ENCODE measurements at regions of chr14 and their contacts with region 1.

Region 1: GRCh38 chr14:100383727-100384158 is 60.6 kb downstream of the SLC25A47 start:
- DNase-seq: peak; percentile 87
- H3K4me3 ChIP-seq: peak overlapping the region in 1 of 2 experiments; percentile 15; a peak in 1 of 4 replicates
- H3K27ac ChIP-seq: peak overlapping the region in 1 of 2 experiments; percentile 90; a peak in 2 of 4 replicates
- H3K4me1 ChIP-seq: peaks cover 10 to 46% of the 10 kb centered on the region in 2 experiments
- H3K27me3 ChIP-seq: no peaks in the 10 kb centered on the region
- CTCF ChIP-seq: peak; percentile 83
- EP300 ChIP-seq: no peak
- RAD21 ChIP-seq: peak; percentile 88

Region 2: DNA sequence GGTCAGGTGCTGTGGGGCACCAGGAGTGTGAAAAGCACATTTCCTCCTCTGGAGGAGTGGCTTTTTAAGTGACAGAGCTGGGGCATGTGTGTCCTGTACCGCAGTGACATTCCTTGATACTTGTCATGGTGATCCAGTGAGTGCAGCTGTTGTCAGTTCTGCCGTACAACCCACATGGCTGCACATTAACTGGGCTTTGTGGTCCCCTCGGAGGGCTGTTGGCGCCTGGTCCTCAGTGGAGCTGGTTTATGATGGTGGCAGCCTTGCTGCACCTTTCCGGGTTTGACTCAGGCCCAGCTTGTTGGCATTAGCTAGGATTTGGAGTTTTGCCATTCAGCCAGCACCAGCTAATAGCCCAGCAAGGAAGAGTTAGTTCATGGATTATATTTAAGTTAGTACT is 16.4 kb after region 1 on chr14:
- CTCF ChIA-PET with region 1: interaction called, 55 read pairs
- POLR2A ChIA-PET with region 1: interaction called, 3 read pairs
- DNase-seq: peak; percentile 53
- H3K4me3 ChIP-seq: no peak overlapping the region
- H3K27ac ChIP-seq: peak overlapping the region; percentile 10 to 100; a peak in 3 of 4 replicates
- H3K4me1 ChIP-seq: peaks cover 5 to 75% of the 10 kb centered on the region in 2 experiments; a peak in 2 of 4 replicates
- H3K27me3 ChIP-seq: no peaks in the 10 kb centered on the region
- CTCF ChIP-seq: no peak
- EP300 ChIP-seq: 0 out of 4 replicates have a peak, but pooled peaks of 1 of the 2 experiments have one; percentile 4
- RAD21 ChIP-seq: no peak

Region 3: GRCh38 chr14:100540141-100540925 is 156.6 kb after region 1 on chr14:
- CTCF ChIA-PET with region 1: interaction called, 82 read pairs
- POLR2A ChIA-PET with region 1: no interaction called
- DNase-seq: peak; percentile 85
- H3K4me3 ChIP-seq: no peak overlapping the region
- H3K27ac ChIP-seq: peak overlapping the region in 1 of 2 experiments; percentile 56; a peak in 1 of 4 replicates
- H3K4me1 ChIP-seq: peaks cover 0 to 46% of the 10 kb centered on the region in 2 experiments; a peak in 1 of 4 replicates
- H3K27me3 ChIP-seq: no peaks in the 10 kb centered on the region
- CTCF ChIP-seq: peak; percentile 48
- EP300 ChIP-seq: no peak
- RAD21 ChIP-seq: peak; percentile 42

Region 4: DNA sequence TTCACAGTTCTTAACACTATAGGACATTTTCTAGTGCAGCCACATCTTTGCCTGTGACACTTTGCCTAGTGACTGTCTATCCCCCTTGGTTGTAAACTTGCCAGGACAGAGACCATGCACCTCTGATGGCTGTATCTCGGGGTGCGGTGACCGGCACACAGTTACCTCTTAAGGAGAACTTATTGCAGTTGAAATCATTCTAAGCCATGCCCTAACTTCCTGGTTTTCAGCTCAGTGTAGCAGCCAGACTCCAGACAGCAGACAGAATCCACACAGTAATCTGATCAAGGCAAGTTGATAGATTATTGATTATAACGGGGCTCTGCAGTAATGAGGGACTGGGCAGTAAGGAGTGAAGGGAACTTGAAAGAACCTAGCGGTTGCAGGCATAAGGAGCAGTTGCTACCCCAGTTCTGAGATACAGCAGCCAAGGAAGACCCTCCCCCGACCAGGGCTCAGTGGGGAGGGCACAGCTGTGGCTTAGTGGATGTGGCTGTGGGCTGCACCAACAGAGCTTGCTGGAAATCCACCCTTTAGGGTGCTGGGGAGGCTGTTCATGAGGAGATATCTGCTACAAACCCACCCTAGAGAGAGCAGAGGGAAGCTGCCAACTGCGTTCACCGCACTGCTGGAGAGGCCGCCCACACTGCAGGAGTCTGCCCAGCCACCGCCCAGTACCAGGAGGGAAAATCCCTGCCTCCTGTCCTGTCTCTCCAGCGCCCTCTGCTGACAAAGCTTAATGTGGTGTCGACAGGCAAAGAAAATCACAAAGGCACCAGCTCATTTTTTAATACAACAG is 261.6 kb after region 1 on chr14:
- CTCF ChIA-PET with region 1: interaction called, 58 read pairs
- POLR2A ChIA-PET with region 1: interaction called, 3 read pairs
- DNase-seq: peak; percentile 84
- H3K4me3 ChIP-seq: peak overlapping the region in 1 of 2 experiments; percentile 39; a peak in 1 of 4 replicates
- H3K27ac ChIP-seq: peak overlapping the region in 1 of 2 experiments; percentile 76; a peak in 2 of 4 replicates
- H3K4me1 ChIP-seq: peaks cover 5 to 34% of the 10 kb centered on the region in 2 experiments; a peak in 2 of 4 replicates
- H3K27me3 ChIP-seq: no peaks in the 10 kb centered on the region
- CTCF ChIP-seq: peak; percentile 53
- EP300 ChIP-seq: no peak
- RAD21 ChIP-seq: peak; percentile 86

Region 5: DNA sequence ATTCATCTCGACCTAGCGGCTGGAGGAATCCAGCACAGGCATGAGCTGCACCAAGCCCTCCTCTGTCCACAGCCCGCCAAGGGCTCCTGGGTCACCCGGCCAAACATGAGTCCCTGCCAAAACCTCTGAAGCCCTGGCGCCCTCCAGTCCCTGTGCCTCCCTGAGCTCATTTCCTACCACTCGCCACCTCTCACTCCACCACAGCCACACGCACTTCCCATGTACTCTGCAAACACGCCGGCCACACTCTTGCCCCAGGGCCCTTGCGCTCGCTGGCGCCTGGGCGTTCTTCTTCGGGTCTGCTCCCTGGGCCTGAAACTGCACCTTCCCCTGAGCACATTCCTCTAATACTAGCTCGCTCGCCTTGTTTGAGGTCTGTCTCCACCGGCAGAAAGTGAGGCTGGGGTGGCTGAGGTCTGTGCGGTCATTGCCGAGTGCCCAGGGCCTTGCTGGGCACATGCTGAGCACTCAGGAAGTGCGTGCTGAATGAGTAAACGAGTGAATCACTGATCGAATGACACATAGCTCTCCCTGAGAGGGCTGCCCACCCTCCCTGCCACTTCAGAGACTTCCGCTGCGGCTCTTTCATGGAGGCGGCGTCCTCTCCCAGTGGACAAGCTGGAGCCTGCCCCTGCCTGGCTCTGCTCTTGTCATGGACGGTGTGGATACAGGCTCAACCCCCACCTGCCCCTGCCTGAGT is 309.3 kb after region 1 on chr14:
- CTCF ChIA-PET with region 1: interaction called, 12 read pairs
- POLR2A ChIA-PET with region 1: no interaction called
- DNase-seq: no peak
- H3K4me3 ChIP-seq: peak overlapping the region in 1 of 2 experiments; percentile 44; a peak in 2 of 4 replicates
- H3K27ac ChIP-seq: peak overlapping the region; percentile 91 to 94
- H3K4me1 ChIP-seq: peaks cover 55 to 83% of the 10 kb centered on the region in 2 experiments
- H3K27me3 ChIP-seq: no peaks in the 10 kb centered on the region
- CTCF ChIP-seq: no peak
- EP300 ChIP-seq: peak in 1 of 2 experiments; percentile 87; a peak in 2 of 4 replicates
- RAD21 ChIP-seq: no peak

Region 6: GRCh38 chr14:100900837-100901390 is 517.2 kb after region 1 on chr14:
- CTCF ChIA-PET with region 1: interaction called, 147 read pairs
- POLR2A ChIA-PET with region 1: interaction called, 21 read pairs
- DNase-seq: peak; percentile 81
- H3K4me3 ChIP-seq: peak overlapping the region in 1 of 2 experiments; percentile 48; a peak in 2 of 4 replicates
- H3K27ac ChIP-seq: peak overlapping the region in 1 of 2 experiments; percentile 99; a peak in 2 of 4 replicates
- H3K4me1 ChIP-seq: peaks cover 0 to 79% of the 10 kb centered on the region in 2 experiments; a peak in 3 of 4 replicates
- H3K27me3 ChIP-seq: peaks cover 6% of the 10 kb centered on the region; the same call in 1 of the 2 replicates
- CTCF ChIP-seq: peak; percentile 46
- EP300 ChIP-seq: no peak
- RAD21 ChIP-seq: peak; percentile 88

Measured in SK-N-SH (cell line).